Sciatic nerve (tissue), 2 donors: ENCODE measurements at regions of chr7 and their contacts with region 1.

Region 1: DNA sequence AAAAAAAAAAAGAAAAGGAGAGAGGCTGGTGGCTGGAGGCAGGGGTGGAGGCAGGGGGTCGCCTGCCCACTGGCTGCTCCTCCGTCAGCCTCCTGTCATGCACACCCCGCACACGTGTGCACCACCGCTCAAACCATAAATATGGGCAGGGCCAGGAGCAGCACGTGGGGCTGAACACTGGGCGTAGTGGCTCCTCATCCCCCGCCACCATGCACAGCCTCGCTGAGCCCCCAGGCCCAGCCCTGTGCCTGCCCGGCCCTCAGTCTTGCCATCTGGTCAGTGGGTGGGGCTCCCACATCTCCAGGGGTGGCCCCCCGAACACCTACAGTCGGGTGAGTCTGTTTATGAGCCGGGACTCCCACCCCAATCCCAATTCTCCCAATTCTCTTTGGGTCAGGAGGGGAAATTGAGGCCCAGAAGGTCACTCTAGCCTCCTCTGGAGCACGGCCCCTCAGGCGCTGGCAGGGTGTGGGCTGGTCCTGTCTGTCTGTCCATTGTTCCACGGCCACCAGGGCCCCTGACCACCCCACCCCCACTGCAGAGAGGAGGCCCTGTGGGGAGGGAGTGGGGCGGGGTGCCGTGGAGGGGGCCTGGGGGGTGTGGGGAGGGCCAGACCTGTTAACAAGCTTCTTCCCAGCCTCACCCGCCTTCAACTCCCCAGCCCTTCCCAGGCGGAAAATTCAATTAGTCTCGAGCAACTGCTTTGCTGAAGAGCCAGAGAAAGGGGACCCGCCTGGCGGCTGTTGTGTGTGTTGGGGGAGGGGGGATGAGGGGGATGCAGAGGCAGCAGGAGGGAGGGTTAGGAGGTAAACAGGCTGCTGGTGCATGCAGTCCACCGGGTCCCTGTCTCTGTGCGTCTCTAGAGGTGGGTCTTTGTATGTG is 19.5 kb upstream of the GRIFIN start:
- DNase-seq: no peak
- ATAC-seq: no peak

Region 2: DNA sequence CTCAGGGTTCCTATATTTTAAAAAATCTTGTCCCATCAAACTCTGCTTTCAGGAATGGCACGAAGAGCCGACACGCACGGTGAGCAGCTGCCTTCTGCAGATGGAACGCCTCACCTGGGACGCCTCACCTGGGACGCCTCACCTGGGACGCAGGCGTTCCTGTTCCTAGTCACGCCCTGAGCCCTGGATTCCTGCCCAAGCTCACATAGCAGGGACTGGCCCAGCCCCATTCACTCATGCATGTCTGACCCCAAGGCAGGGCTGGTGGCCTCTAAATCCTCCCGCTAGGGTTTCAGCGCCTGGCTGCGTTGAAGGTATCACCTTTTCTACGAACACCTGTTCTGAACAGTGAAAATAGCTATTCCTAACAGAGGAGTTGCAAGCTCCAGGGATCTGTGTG is 498.2 kb after region 1 on chr7:
- intact Hi-C with region 1: no loop called
- DNase-seq: no peak
- ATAC-seq: no peak

Region 3: GRCh38 chr7:3042861-3043489 is 547.3 kb after region 1 on chr7:
- intact Hi-C with region 1: loop called (anchors 10 kb)
- DNase-seq: no peak
- ATAC-seq: no peak